Lower leg skin (tissue), 4 donors: ENCODE measurements at regions of chr10 and their contacts with region 1.

Region 1: DNA sequence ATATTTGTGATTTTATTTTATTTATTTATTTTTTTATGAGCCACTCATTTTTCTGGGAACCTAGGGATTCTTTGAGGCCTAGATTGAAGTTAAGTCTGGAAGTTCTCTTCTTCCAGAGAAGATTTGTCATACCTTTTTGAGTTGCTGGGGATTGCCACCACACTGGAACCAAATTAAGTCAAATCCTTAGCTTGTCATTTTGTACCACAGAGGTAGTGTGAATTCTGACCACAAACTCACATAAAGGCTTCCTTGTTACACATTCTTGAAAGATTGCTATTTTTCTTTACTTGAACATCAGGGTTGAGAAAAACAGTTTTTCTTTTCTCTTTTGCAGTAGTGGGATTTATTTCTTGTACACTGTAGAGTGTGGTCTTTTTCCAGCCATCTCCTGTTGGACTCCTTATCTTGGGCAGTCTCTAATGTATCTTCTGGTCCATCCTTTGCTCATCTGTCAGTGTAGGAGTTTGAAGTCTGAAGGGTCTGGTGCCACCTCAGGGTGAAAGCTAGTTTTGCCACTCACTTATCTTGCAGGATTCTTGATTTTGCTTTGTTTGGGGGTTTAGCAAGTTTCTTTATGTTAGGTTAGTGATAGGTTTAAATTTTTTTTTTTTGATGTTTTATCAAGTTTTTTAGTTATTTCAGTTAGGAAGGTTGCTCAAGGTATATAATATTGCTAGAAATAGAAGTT is 24.8 kb downstream of the PCBD1 start:
- DNase-seq: no peak
- H3K4me3 ChIP-seq: no peak overlapping the region
- CTCF ChIP-seq: no peak
- POLR2A ChIP-seq: no peak

Region 2: DNA sequence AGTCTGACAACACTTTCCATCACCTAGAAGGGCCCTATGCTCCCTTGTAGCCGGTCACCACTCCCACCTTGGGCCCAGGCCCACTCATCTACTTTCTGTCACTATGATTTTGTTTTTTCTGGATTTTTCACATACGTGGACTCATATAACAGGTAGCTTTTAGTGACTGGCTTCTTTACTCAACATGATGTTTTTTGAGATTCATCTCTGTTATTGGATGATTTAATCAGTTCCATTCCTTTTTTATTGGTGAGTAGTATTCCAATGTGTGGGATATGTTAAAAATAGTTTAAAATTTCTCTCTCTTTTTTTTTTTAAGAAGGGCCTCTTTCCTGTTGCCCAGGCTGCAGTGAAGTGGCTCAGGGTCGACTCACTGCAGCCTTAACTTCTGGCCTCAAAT is 375.8 kb before region 1 on chr10:
- intact Hi-C with region 1: loop called (anchors 5 kb)
- DNase-seq: no peak
- H3K4me3 ChIP-seq: no peak overlapping the region
- CTCF ChIP-seq: no peak
- POLR2A ChIP-seq: no peak

Region 3: GRCh38 chr10:70779511-70780369 is 83.9 kb before region 1 on chr10:
- intact Hi-C with region 1: no loop called
- DNase-seq: peak; percentile 49 to 78
- H3K4me3 ChIP-seq: no peak overlapping the region
- CTCF ChIP-seq: no peak
- POLR2A ChIP-seq: no peak

Region 4: GRCh38 chr10:71383972-71384687 is 520.5 kb after region 1 on chr10:
- intact Hi-C with region 1: no loop called
- DNase-seq: peak; percentile 48 to 95
- H3K4me3 ChIP-seq: no peak overlapping the region
- CTCF ChIP-seq: peak in 1 of 3 donors; percentile 33
- POLR2A ChIP-seq: no peak